ENCODE measurements at regions of chr2 and their contacts with region 1.

Region 1: GRCh38 chr2:68362069-68362468 is 3.0 kb upstream of the PLEK start:
- DNase-seq: peak; percentile 47
- H3K4me3 ChIP-seq: no peak overlapping the region
- H3K27ac ChIP-seq: no peak overlapping the region
- H3K4me1 ChIP-seq: no peaks in the 10 kb centered on the region
- H3K27me3 ChIP-seq: no peaks in the 10 kb centered on the region
- CTCF ChIP-seq: peak; percentile 84 to 85

Region 2: DNA sequence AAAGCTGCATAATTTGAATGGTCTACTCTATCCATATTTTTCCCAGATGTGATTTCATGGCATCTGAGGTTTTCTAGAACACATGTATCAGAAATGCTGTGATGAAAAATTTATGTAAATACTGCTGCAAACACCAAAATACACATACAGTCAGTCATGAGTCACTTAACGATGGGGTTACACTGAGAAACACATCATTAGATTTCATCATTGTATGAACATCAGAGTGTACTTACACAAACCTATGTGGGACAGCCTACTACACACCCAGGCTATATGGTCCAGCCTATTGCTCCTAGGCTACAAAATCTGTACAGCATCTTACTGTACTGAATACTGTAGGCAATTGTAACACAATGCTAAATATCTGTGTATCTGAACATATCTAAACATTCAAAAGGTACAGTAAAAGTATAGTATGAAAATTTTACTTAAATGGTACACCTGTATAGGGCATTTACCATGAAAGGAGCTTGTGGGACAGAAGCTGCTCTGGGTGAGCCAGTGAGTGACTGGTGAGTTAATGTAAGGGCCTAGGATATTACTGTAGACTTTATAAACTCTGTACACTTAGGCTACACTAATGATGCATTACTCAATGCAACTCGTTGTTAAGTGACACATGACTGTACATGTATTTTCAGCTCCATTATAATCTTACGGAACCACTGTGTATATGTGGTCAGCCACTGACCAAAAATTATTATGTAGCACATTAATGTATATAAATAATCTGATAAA is 170.9 kb before region 1 on chr2:
- CTCF ChIA-PET with region 1: no interaction called
- dilution Hi-C with region 1: no loop called
- in situ Hi-C with region 1: no loop called
- intact Hi-C with region 1: loop called (anchors 5 kb)
- DNase-seq: peak; percentile 84
- H3K4me3 ChIP-seq: no peak overlapping the region
- H3K27ac ChIP-seq: peak overlapping the region; percentile 77
- H3K4me1 ChIP-seq: peaks cover 29% of the 10 kb centered on the region
- H3K27me3 ChIP-seq: no peaks in the 10 kb centered on the region
- CTCF ChIP-seq: no peak

Region 3: DNA sequence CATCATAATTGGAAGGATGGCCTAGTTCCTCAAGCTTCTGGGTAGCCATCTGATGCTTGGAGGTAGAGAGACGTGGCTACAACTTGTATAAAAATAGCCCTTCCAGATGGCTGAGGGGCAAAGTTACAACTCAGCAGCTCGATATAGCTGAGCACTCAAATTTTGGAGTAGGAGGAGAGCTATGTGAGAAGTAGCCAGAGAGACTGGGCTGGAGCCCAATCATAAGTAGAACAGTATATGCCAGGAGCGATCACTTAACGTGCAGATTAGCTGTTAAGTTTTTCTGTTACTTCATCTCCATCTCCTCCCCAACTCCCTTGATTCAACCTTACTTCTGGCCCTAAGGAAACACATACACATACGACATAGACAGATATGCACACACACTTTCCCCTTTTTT is 71.2 kb before region 1 on chr2:
- CTCF ChIA-PET with region 1: interaction called, 12 read pairs
- dilution Hi-C with region 1: no loop called
- in situ Hi-C with region 1: no loop called
- intact Hi-C with region 1: loop called (anchors 5 kb)
- DNase-seq: no peak
- H3K4me3 ChIP-seq: no peak overlapping the region
- H3K27ac ChIP-seq: no peak overlapping the region
- H3K4me1 ChIP-seq: no peaks in the 10 kb centered on the region
- H3K27me3 ChIP-seq: peaks cover 2% of the 10 kb centered on the region
- CTCF ChIP-seq: no peak

Region 4: DNA sequence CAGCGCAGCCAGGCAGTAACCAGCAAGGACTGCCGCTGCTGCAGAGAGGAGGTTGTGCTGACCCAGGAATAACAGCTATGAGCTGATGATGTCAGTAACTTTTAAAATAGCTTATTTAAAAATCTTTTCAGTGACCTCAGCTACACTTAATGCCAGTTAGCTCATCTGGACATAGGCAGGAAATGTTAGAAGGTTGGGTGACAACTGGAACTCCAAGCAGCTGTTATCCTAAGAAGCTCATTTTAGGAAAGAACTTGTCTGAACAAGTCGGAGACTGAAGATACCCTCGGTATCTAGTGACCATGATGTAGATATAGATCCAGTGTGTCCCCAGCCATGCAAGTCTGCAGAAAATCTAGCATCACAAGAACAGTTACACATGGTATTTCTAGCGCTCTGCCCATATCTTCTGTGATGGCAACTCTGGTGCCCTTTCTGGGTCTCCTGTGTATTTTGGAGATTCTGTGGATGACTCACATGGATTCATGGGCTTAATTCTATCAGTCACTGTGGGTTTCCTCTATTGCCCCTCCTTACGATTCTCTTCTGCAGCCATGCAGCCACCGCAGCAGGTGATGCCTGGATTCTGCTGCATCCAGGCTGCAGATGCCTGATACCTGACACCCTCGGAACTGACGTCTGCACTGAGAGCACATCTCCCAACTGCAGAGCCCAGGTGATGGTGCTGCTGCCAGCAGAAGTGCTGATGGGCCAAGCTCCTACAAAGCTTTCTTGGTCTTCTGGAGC is 16.8 kb before region 1 on chr2:
- CTCF ChIA-PET with region 1: no interaction called
- dilution Hi-C with region 1: no loop called
- in situ Hi-C with region 1: no loop called
- intact Hi-C with region 1: no loop called
- DNase-seq: no peak
- H3K4me3 ChIP-seq: no peak overlapping the region
- H3K27ac ChIP-seq: no peak overlapping the region
- H3K4me1 ChIP-seq: peaks cover 7% of the 10 kb centered on the region
- H3K27me3 ChIP-seq: no peaks in the 10 kb centered on the region
- CTCF ChIP-seq: no peak

Region 5: DNA sequence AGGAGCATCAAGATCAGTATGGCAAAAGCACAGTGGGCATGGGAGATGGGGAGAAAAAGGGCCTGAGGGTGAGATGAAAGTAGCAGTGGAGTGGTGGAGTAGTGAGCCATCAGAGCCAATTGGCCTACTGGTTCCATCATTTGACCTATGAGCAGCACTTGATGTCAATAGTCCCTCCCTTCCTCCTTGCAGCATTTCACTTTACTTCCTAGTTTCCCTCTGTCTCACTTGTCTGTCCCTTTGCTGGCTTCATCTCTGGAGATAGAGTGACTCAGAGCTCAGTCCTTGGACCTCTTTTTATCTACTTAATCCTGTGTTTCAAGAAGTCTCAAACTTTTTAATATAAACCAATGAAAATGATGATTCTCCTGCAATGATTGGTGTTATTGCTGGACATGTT is 72.9 kb after region 1 on chr2:
- CTCF ChIA-PET with region 1: no interaction called
- dilution Hi-C with region 1: no loop called
- in situ Hi-C with region 1: loop called (anchors 5 to 10 kb)
- intact Hi-C with region 1: no loop called
- DNase-seq: no peak
- H3K4me3 ChIP-seq: no peak overlapping the region
- H3K27ac ChIP-seq: no peak overlapping the region
- H3K4me1 ChIP-seq: no peaks in the 10 kb centered on the region
- H3K27me3 ChIP-seq: no peaks in the 10 kb centered on the region
- CTCF ChIP-seq: no peak

Region 6: GRCh38 chr2:68441179-68441993 is 79.3 kb after region 1 on chr2:
- CTCF ChIA-PET with region 1: no interaction called
- dilution Hi-C with region 1: no loop called
- in situ Hi-C with region 1: loop called (anchors 5 to 10 kb)
- intact Hi-C with region 1: loop called (anchors 1 kb)
- DNase-seq: peak; percentile 57
- H3K4me3 ChIP-seq: no peak overlapping the region
- H3K27ac ChIP-seq: no peak overlapping the region
- H3K4me1 ChIP-seq: no peaks in the 10 kb centered on the region
- H3K27me3 ChIP-seq: no peaks in the 10 kb centered on the region
- CTCF ChIP-seq: peak; percentile 77 to 87